HAP-1 (cell line): ENCODE measurements at regions of chr7 and their contacts with region 1.

Region 1: GRCh38 chr7:11831736-11832495 is at the start of gene THSD7A:
- DNase-seq: peak; percentile 66 to 72
- H3K4me3 ChIP-seq: peak within 1 kb of the TSS; percentile 44
- H3K4me1 ChIP-seq: peaks cover 19% of the 10 kb centered on the region
- H3K27me3 ChIP-seq: no peaks in the 10 kb centered on the region

Region 2: DNA sequence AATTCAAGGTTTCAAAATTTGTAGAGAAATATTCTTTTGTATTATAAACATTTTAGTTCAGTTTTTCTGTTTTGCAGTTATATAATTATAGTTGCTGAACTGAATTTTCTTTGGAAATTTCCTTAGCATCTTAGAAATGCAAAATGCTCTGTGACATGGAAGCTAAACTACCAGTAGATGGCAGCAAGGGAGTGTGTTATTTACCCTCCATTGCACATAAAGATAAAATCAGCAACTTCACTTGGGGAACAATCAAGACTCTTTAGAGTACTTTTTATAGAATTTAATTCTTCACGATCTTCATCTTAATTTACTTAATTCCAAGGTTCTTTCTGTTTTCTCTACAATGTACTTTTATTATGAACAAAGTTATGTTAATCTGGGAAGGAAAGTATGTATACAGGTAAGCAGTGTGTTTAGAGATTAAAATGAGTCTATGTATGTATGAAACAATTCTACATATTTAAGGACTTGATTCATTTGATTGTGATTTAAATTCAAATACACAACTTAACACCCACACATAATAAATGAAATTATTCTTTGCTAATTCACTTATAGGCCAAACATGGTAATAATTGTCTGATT is 404.1 kb before region 1 on chr7:
- in situ Hi-C with region 1: loop called (anchors 25 kb)
- DNase-seq: peak; percentile 32 to 88
- H3K4me3 ChIP-seq: no peak overlapping the region
- H3K4me1 ChIP-seq: no peaks in the 10 kb centered on the region
- H3K27me3 ChIP-seq: no peaks in the 10 kb centered on the region

Region 3: GRCh38 chr7:12322284-12322902 is 490.5 kb after region 1 on chr7:
- in situ Hi-C with region 1: loop called (anchors 10 kb)
- DNase-seq: peak in 1 of 2 experiments; percentile 16
- H3K4me3 ChIP-seq: no peak overlapping the region
- H3K4me1 ChIP-seq: no peaks in the 10 kb centered on the region
- H3K27me3 ChIP-seq: no peaks in the 10 kb centered on the region

Region 4: GRCh38 chr7:12490117-12490688 is 658.3 kb after region 1 on chr7:
- in situ Hi-C with region 1: loop called (anchors 25 kb)
- DNase-seq: peak in 1 of 2 experiments; percentile 70
- H3K4me3 ChIP-seq: no peak overlapping the region
- H3K4me1 ChIP-seq: no peaks in the 10 kb centered on the region; the same call in none of the 2 replicates
- H3K27me3 ChIP-seq: no peaks in the 10 kb centered on the region